ENCODE measurements at regions of chr9 and their contacts with region 1.

Region 1: GRCh38 chr9:110486218-110486617 is 93.3 kb downstream of the SVEP1 start:
- DNase-seq: no peak
- H3K4me3 Mint-ChIP-seq: no peak overlapping the region
- H3K27ac Mint-ChIP-seq: no peak overlapping the region
- H3K4me1 Mint-ChIP-seq: no peaks in the 10 kb centered on the region
- H3K27me3 Mint-ChIP-seq: peaks cover 3% of the 10 kb centered on the region

Region 2: GRCh38 chr9:110241260-110241857 is 244.9 kb before region 1 on chr9:
- intact Hi-C with region 1: no loop called
- DNase-seq: no peak
- H3K4me3 Mint-ChIP-seq: no peak overlapping the region
- H3K27ac Mint-ChIP-seq: no peak overlapping the region
- H3K4me1 Mint-ChIP-seq: peaks cover 2% of the 10 kb centered on the region
- H3K27me3 Mint-ChIP-seq: no peaks in the 10 kb centered on the region

Region 3: DNA sequence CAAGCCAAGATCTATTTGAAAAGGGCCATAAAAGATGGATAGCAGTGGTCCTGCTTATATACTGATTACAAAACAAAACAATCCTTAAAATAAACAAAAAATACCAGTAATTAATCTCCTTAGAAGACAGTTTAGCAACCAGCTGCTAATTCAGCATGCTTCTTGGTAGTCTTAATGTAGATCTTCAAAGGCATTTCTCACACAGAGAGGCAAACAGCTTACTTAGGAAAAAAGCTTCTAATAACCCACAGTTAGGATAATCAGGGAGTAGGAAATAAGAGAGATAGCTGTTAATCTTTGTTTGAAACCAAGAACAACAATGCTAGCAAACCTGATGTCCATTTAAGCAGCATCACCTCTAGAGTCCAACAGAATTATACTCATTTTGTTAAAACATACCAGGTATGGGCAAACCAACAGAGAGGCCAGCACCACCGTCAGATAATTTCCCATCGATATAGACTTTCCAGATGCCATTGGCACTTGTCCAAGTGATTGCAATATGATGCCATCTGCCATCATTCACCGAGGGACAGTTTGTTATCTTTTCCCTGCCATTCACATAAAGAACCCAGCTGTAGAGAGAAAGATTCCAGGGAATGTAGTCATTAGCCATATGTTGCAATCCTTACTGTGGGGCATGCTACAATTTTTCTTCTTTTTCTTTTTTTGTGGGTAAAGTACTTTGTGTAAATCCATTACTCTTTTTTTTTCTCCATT is 42.9 kb before region 1 on chr9:
- intact Hi-C with region 1: no loop called
- DNase-seq: no peak
- H3K4me3 Mint-ChIP-seq: no peak overlapping the region
- H3K27ac Mint-ChIP-seq: no peak overlapping the region
- H3K4me1 Mint-ChIP-seq: no peaks in the 10 kb centered on the region
- H3K27me3 Mint-ChIP-seq: no peaks in the 10 kb centered on the region

Region 4: DNA sequence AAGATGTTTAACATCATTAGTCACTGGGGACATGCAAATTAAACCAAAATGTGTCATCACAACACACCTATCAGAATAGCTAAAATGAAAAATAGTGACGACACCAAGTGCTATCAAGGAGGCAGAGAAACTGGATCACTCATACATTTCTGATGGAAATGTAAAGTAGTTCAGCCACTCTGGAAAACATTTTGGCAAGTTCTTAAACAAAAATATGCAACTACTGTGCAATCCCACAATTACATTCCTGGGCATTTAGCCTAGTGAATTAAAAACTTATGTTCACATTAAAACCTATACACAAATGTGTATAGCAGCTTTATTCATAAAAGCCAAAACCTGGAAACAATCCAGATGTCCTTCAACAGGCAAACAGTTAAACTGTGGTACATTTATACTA is 40.2 kb after region 1 on chr9:
- intact Hi-C with region 1: no loop called
- DNase-seq: no peak
- H3K4me3 Mint-ChIP-seq: no peak overlapping the region
- H3K27ac Mint-ChIP-seq: no peak overlapping the region
- H3K4me1 Mint-ChIP-seq: no peaks in the 10 kb centered on the region
- H3K27me3 Mint-ChIP-seq: no peaks in the 10 kb centered on the region

Region 5: GRCh38 chr9:110538225-110539041 is 52.2 kb after region 1 on chr9:
- intact Hi-C with region 1: loop called (anchors 2 kb)
- DNase-seq: no peak
- H3K4me3 Mint-ChIP-seq: no peak overlapping the region
- H3K27ac Mint-ChIP-seq: no peak overlapping the region
- H3K4me1 Mint-ChIP-seq: no peaks in the 10 kb centered on the region
- H3K27me3 Mint-ChIP-seq: no peaks in the 10 kb centered on the region

Measured in activated T-helper 1 cell treated with anti-CD3 and anti-CD28 coated beads, Interleukin-12 subunit alpha, Interleukin-12 subunit beta, Interleukin-2, Interleukin-4 antibody, amounts not matched to agents 30 ng/mL and 10 ng/mL and 1 ng/mL, durations not matched to agents 14 hours and 24 hours and 36 hours (primary cell).